ENCODE measurements at regions of chr6 and their contacts with region 1.

Region 1: DNA sequence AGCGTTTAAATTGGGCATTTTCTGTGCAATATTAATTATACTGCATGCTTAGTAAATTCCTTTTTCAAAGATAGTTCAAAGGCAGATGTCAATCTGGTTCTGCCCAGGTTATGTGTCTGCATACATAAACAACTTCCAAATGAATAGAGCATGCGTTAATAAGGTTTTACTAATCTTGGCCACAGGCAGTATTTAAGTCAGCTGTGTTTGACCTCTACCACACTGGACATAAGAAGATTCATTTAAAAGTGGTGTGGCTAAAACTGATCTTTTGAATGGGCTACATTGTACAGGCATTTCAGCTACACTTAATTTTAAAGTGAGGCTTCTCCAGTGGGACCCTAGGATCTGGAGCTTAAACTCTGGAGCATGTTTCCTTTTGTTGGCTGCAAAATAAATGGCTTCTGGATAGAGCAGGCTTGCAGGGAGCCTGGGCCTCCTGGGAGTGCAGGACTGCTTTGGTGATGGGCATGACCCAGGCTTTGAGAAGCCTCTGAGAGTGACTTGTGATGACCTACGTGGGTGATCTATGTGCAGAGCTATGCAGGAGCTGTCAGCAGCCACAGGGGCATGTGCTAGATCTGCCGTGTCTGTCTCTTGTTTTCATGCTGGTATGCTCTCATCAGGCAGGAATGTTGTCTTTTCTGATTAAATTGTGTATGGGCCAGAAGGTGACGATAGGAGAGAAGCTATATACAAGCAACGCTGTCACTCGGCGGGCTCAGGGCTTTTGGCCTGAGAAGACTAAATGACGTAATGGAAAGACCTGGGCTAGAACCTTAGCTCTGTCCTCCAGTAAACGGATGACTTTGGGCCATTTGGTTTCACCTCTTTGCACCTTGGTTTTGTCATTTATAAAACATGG is 331.2 kb downstream of the QKI start:
- DNase-seq: peak; percentile 52 to 71
- ATAC-seq: peak; percentile 83 to 95 (median 92)
- H3K4me3 ChIP-seq: no peak overlapping the region
- H3K27ac ChIP-seq: peak overlapping the region; percentile 36 to 87 (median 65)
- H3K4me1 ChIP-seq: peaks cover 8 to 59% (median 25%) of the 10 kb centered on the region in 9 donors
- H3K27me3 ChIP-seq: no peaks in the 10 kb centered on the region
- CTCF ChIP-seq: no peak

Region 2: GRCh38 chr6:163585932-163586437 is 159.8 kb before region 1 on chr6:
- intact Hi-C with region 1: loop called in 1 of 10 experiments (anchors 10 kb)
- DNase-seq: peak; percentile 49 to 68
- ATAC-seq: peak; percentile 65 to 90 (median 79)
- H3K4me3 ChIP-seq: peak overlapping the region in 2 of 10 donors; percentile 1 to 8
- H3K27ac ChIP-seq: peak overlapping the region in 8 of 10 donors; percentile 27 to 63 (median 47)
- H3K4me1 ChIP-seq: peaks cover 4 to 58% (median 28%) of the 10 kb centered on the region in 9 donors
- H3K27me3 ChIP-seq: no peaks in the 10 kb centered on the region
- CTCF ChIP-seq: no peak

Region 3: GRCh38 chr6:163837691-163838431 is 92.1 kb after region 1 on chr6:
- intact Hi-C with region 1: loop called in 1 of 10 experiments (anchors 1 kb)
- DNase-seq: peak in 1 of 2 donors; percentile 16
- ATAC-seq: peak in 7 of 8 donors; percentile 69 to 78 (median 75)
- H3K4me3 ChIP-seq: peak overlapping the region in 5 of 10 donors; percentile 16 to 30 (median 17)
- H3K27ac ChIP-seq: peak overlapping the region; percentile 18 to 73 (median 60)
- H3K4me1 ChIP-seq: peaks cover 0 to 30% (median 14%) of the 10 kb centered on the region in 9 donors
- H3K27me3 ChIP-seq: no peaks in the 10 kb centered on the region
- CTCF ChIP-seq: no peak

Measured in heart right ventricle (tissue), 16 donors.